ENCODE measurements at regions of chr3 and their contacts with region 1.

Region 1: GRCh38 chr3:186644683-186645082 is 4.5 kb downstream of the FETUB start:
- DNase-seq: no peak

Region 2: GRCh38 chr3:186625600-186626042 is 19.1 kb before region 1 on chr3:
- intact Hi-C with region 1: loop called in 1 of 2 experiments (anchors 2 kb)
- DNase-seq: no peak

Region 3: GRCh38 chr3:186700267-186700666 is 55.6 kb after region 1 on chr3:
- intact Hi-C with region 1: no loop called
- DNase-seq: no peak

Measured in posterior vena cava (tissue), 2 donors.